GM10248 (cell line): ENCODE measurements at regions of chr14 and their contacts with region 1.

Region 1: GRCh38 chr14:31047503-31047902 is 21.3 kb upstream of the STRN3 start:
- DNase-seq: no peak
- CTCF ChIP-seq: no peak

Region 2: DNA sequence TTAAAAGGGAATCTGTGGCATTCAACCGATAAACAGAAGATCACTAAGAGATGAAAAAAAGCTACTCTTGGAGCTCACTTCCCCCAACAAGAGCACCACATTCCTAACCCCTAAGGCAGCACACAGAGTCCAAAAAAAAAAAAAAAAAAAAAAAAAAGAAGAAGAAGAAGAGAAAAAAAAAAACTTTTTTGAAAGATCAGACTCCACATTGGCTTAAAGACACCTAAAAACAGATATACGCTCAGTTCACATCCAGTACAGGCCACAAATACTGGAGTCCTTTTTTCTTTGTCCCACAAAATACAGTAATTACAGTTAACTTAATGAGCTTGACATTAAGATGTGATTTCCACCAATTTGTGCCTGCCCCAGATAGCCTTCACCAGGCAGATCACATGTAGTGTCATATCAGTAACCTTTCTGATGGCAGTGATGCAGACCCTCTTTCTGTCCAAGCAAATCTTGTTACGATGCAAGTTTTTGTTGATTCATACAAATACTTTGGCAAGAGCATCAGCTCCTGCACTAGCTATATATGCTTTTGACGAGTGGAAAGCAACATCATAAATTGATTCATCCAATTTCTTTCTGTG is 152.5 kb before region 1 on chr14:
- CTCF ChIA-PET with region 1: no interaction called
- POLR2A ChIA-PET with region 1: interaction called, 12 read pairs
- DNase-seq: no peak
- CTCF ChIP-seq: no peak

Region 3: DNA sequence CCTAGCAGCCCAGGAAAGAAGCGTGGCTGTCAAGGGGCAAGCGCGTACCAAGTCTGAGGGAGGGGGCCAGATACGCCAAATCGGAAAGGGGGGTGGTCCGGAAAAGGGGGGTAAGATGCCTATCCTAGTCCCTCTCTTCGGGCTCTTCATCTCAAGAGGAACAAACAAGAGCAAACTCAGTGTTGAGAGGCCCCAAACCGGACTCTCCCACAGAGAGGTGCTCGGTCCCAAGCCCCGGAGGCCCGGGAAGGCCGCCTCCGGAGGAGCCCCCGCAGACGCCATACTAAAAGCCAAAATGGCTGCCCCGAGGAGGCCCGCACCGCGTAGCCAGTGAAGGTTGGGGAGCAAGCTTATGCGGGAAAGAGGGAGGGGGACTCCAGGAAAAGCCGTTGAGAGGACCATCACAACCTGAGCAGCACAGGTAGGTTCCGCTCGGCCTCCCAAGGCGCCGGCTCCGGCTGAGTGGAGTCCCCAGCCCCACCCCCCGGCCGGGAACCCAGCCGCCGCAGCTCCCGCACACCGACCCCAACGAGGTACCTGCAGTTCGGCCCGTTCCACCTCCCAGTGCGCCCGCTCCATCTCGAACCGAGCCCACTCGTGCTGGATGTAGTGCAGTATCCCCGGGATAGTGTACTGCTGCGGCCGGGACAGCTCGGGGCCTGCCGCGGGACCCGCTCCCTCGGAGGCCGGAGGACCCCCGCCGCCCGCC is 22.0 kb before region 1 on chr14 and contains the start of gene AP4S1:
- CTCF ChIA-PET with region 1: no interaction called
- POLR2A ChIA-PET with region 1: no interaction called
- DNase-seq: peak; percentile 39
- CTCF ChIP-seq: no peak